Left cardiac atrium (tissue), 4 donors: ENCODE measurements at regions of chr7 and their contacts with region 1.

Region 1: DNA sequence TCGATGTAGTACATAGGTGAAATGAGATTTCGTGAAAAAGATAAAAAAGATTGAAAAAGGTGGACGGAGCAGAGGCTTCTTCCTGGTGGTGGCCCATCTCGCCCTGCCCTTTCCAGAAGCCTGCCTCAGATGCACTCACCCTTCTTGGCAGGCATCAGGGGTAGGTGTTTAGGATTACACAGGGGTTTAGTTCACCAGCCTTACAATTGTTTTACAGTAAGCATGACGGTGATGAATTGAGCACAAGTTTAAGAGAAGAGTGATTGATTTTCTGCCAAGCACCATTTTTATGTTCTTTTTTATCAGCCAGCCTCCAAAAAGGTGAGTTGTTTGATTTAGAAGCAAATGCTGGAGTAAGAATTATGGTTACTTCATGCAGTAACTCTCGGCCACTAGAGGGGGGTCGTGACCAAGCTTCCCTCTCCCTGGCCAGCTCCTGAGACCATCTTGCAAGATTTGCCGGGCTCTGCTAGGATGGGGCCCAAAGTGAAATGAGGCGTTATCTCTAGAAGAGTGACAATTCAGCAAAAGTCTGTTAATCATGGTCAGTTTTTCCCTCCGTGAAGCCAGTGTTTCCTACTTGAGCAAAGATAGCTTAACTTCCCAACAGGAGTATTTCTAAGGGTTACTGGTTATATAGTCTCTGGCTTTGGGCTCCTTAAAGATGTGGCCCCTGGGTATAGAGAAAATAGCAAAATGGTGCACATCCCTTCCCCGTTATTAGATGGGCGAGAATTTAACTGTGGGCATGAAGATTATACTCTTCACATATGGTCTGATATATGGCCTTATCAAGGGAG is 228.8 kb downstream of the BMPER start:
- DNase-seq: peak; percentile 77
- ATAC-seq: peak; percentile 77 to 80

Region 2: DNA sequence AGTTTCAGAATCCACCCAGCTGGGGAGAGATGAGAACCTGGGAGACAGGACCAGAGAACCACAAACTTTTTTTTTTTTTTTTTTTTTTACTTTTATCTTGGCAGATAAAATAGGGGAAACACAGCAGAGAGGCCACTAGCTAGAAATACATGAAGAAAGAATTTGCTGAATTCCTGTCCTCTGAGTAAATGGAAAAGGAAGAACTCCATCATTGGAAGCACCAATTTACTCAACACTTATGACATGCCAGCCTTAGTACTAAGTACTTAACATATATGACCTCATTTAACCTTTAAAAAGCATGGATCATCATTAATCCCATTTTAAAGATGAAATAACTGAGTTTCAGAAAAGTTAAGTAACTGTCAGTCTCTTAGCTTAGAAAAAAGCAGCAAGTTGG is 180.8 kb after region 1 on chr7:
- intact Hi-C with region 1: loop called in 1 of 2 experiments (anchors 10 kb)
- DNase-seq: no peak
- ATAC-seq: no peak

Region 3: DNA sequence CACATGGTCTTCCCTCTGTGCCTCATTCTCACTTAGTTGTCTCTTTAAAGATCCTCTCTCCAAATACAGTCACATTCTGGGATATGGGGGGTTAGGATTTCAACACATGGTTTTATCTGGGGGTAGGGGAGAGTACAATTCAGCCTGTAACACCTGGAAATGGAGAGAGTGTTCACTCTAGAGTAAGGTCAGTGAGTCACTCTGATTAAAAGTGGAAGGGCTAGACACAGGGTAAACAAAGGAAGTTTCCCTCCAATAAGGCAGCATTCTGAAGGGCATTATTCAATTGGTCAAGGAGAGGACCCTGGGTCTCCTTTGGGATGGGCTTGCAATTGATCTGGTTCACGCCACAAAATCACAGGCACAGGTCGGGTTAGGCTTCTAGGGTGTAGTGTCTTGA is 291.0 kb after region 1 on chr7:
- intact Hi-C with region 1: loop called in 1 of 2 experiments (anchors 10 kb)
- DNase-seq: no peak
- ATAC-seq: no peak

Region 4: GRCh38 chr7:35319606-35320005 is 1185.4 kb after region 1 on chr7:
- intact Hi-C with region 1: no loop called
- DNase-seq: no peak
- ATAC-seq: no peak